ENCODE measurements at regions of chr11 and their contacts with region 1.

Region 1: GRCh38 chr11:63671322-63672155 is at the start of gene ATL3:
- DNase-seq: peak; percentile 97
- ATAC-seq: peak; percentile 92
- H3K4me3 ChIP-seq: peak within 1 kb of the TSS; percentile 22 to 81 (median 78)
- H3K4me3 Mint-ChIP-seq: peak within 1 kb of the TSS; percentile 88
- H3K27ac ChIP-seq: peak within 1 kb of the TSS; percentile 62 to 73
- H3K27ac Mint-ChIP-seq: peak within 1 kb of the TSS; percentile 92
- H3K4me1 ChIP-seq: peaks cover 9 to 13% of the 10 kb centered on the region in 2 donors
- H3K4me1 Mint-ChIP-seq: peaks cover 22% of the 10 kb centered on the region
- H3K27me3 ChIP-seq: no peaks in the 10 kb centered on the region
- H3K27me3 Mint-ChIP-seq: no peaks in the 10 kb centered on the region
- CTCF ChIP-seq: no peak
- total RNA-seq, gene ATL3: 33.8 and 36.5 TPM in 2 replicates

Region 2: DNA sequence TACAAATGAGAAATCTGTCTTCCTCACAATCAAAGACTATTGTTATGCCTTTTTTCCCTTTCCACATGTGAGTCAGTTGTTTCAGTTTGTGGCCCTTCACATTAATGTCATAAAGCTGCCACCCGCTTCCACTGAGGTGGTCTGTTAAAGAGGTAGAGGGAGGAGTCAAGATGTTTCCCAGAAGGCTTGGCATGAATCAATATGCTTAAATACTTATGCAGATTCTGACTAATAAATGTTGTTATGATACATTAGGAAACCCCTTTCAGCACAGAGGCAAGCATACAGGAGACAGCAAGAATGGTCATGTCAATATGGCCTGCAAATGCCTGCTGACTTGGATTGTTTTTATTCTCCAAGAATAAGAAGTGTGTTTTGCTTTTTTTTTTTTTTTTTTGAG is 16.3 kb after region 1 on chr11:
- CTCF ChIA-PET with region 1: interaction called, 19 read pairs
- POLR2A ChIA-PET with region 1: interaction called, 4 read pairs
- intact Hi-C with region 1: loop called (anchors 2 kb)
- DNase-seq: no peak
- ATAC-seq: no peak
- H3K4me3 ChIP-seq: no peak overlapping the region
- H3K4me3 Mint-ChIP-seq: no peak overlapping the region
- H3K27ac ChIP-seq: no peak overlapping the region
- H3K27ac Mint-ChIP-seq: no peak overlapping the region
- H3K4me1 ChIP-seq: peaks cover 2% of the 10 kb centered on the region in 2 donors
- H3K4me1 Mint-ChIP-seq: peaks cover 9% of the 10 kb centered on the region
- H3K27me3 ChIP-seq: no peaks in the 10 kb centered on the region
- H3K27me3 Mint-ChIP-seq: no peaks in the 10 kb centered on the region
- CTCF ChIP-seq: no peak

Region 3: DNA sequence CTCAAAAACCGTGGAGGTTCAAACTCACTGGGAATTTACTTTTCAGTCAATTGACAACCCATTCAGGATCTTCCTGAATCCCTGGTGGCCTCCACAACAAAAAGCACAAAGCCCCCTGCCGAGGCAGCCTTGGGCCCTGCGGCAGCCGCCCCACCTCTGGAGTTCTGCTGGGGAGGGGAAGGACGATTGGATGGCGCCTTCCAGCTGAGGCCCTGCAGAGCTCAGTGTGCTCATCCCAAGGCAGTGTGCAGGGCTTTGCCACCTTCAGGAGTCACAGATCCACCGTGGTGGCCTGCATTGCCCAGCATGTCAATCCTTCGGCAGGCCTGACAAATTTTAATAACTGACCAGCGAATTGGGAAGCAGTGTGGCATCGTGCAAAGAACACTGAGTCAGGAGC is 89.6 kb after region 1 on chr11:
- CTCF ChIA-PET with region 1: no interaction called
- POLR2A ChIA-PET with region 1: no interaction called
- intact Hi-C with region 1: no loop called
- DNase-seq: no peak
- ATAC-seq: no peak
- H3K4me3 ChIP-seq: no peak overlapping the region
- H3K4me3 Mint-ChIP-seq: no peak overlapping the region
- H3K27ac ChIP-seq: no peak overlapping the region
- H3K27ac Mint-ChIP-seq: no peak overlapping the region
- H3K4me1 ChIP-seq: no peaks in the 10 kb centered on the region
- H3K4me1 Mint-ChIP-seq: peaks cover under 1% of the 10 kb centered on the region
- H3K27me3 ChIP-seq: no peaks in the 10 kb centered on the region
- H3K27me3 Mint-ChIP-seq: no peaks in the 10 kb centered on the region
- CTCF ChIP-seq: no peak

Region 4: GRCh38 chr11:63974259-63975143 is 303.0 kb after region 1 on chr11 and contains the start of gene COX8A:
- CTCF ChIA-PET with region 1: no interaction called
- POLR2A ChIA-PET with region 1: no interaction called
- intact Hi-C with region 1: loop called (anchors 1 kb)
- DNase-seq: peak; percentile 98
- ATAC-seq: peak; percentile 98
- H3K4me3 ChIP-seq: peak within 1 kb of the TSS; percentile 81 to 99 (median 94)
- H3K4me3 Mint-ChIP-seq: peak within 1 kb of the TSS; percentile 99
- H3K27ac ChIP-seq: peak within 1 kb of the TSS; percentile 83 to 94
- H3K27ac Mint-ChIP-seq: peak within 1 kb of the TSS; percentile 98
- H3K4me1 ChIP-seq: peaks cover 6 to 21% of the 10 kb centered on the region in 2 donors
- H3K4me1 Mint-ChIP-seq: peaks cover 29% of the 10 kb centered on the region
- H3K27me3 ChIP-seq: no peaks in the 10 kb centered on the region
- H3K27me3 Mint-ChIP-seq: peaks cover 3% of the 10 kb centered on the region
- CTCF ChIP-seq: no peak
- total RNA-seq, gene COX8A: 92.6 and 99.0 TPM in 2 replicates

Region 5: GRCh38 chr11:65314501-65315203 is 1643.1 kb after region 1 on chr11 and contains the start of gene CDC42EP2:
- CTCF ChIA-PET with region 1: no interaction called
- POLR2A ChIA-PET with region 1: no interaction called
- intact Hi-C with region 1: no loop called
- DNase-seq: peak; percentile 85
- ATAC-seq: peak; percentile 96
- H3K4me3 ChIP-seq: peak within 1 kb of the TSS; percentile 40 to 85 (median 81)
- H3K4me3 Mint-ChIP-seq: peak within 1 kb of the TSS; percentile 84
- H3K27ac ChIP-seq: peak within 1 kb of the TSS in 1 of 2 donors; percentile 51
- H3K27ac Mint-ChIP-seq: no peak within 1 kb of the TSS
- H3K4me1 ChIP-seq: peaks cover 8 to 17% of the 10 kb centered on the region in 2 donors
- H3K4me1 Mint-ChIP-seq: peaks cover 10% of the 10 kb centered on the region
- H3K27me3 ChIP-seq: peaks cover 0 to 12% (median 5%) of the 10 kb centered on the region in 4 experiments
- H3K27me3 Mint-ChIP-seq: peaks cover 9% of the 10 kb centered on the region
- CTCF ChIP-seq: no peak
- total RNA-seq, gene CDC42EP2: 1.1 and 1.5 TPM in 2 replicates